Aorta (tissue), 5 donors: ENCODE measurements at regions of chr6 and their contacts with region 1.

Region 1: DNA sequence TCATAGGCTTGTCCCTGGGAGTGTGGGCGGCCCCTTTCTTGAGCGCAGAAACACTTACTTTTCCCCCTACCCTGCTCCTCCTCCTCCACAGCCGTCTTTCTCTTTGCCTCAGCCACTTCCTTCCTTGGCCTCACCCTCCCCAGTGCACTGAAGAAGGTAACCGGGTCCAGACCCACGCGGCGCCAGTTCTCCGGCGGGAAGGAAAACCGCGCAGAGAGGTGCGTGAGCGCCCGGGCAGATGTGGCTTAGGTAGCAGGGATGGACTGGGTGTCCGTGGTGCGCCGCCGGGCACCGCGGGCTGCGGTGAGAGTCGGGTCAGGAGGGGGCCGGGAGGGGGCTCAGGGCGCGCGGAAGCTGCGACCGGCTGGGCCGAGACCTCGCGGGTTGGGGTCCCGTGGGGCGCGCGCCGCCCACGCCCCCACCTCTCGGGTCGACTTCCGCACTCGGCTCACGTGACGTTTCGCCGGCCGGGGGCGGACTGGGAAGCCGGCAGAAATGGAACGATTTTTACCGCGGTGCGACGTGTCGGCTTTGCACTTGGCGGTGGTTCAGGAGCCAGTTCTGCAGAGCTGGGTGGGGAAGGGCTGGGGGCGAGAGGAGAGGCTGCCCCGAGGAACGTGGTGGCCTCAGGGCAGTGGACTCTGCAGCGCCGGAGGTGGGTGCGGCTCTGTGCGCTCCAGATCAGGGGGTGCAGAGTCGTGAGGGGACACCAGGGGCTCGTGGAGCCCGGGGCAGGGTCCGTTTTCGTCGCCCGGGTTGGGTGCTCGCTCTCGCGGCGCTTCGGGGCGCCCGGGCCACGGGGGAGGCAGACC is at the start of gene ABRACL:
- DNase-seq: peak; percentile 79 to 85
- ATAC-seq: peak; percentile 76
- H3K4me3 ChIP-seq: peak within 1 kb of the TSS; percentile 61 to 69
- H3K27ac ChIP-seq: peak within 1 kb of the TSS; percentile 29 to 71
- H3K4me1 ChIP-seq: no peaks in the 10 kb centered on the region
- H3K27me3 ChIP-seq: no peaks in the 10 kb centered on the region
- total RNA-seq, gene ABRACL: 16.4 to 18.6 TPM

Region 2: GRCh38 chr6:139134817-139135581 is 106.1 kb after region 1 on chr6 and contains the start of gene HECA:
- intact Hi-C with region 1: loop called (anchors 5 kb)
- DNase-seq: peak; percentile 99 to 100
- ATAC-seq: peak; percentile 95
- H3K4me3 ChIP-seq: peak within 1 kb of the TSS; percentile 96 to 100
- H3K27ac ChIP-seq: peak within 1 kb of the TSS; percentile 71 to 98
- H3K4me1 ChIP-seq: peaks cover 2 to 7% of the 10 kb centered on the region in 2 donors
- H3K27me3 ChIP-seq: no peaks in the 10 kb centered on the region
- total RNA-seq, gene HECA: 47.4 to 53.2 TPM